ENCODE measurements at regions of chr3 and their contacts with region 1.

Region 1: DNA sequence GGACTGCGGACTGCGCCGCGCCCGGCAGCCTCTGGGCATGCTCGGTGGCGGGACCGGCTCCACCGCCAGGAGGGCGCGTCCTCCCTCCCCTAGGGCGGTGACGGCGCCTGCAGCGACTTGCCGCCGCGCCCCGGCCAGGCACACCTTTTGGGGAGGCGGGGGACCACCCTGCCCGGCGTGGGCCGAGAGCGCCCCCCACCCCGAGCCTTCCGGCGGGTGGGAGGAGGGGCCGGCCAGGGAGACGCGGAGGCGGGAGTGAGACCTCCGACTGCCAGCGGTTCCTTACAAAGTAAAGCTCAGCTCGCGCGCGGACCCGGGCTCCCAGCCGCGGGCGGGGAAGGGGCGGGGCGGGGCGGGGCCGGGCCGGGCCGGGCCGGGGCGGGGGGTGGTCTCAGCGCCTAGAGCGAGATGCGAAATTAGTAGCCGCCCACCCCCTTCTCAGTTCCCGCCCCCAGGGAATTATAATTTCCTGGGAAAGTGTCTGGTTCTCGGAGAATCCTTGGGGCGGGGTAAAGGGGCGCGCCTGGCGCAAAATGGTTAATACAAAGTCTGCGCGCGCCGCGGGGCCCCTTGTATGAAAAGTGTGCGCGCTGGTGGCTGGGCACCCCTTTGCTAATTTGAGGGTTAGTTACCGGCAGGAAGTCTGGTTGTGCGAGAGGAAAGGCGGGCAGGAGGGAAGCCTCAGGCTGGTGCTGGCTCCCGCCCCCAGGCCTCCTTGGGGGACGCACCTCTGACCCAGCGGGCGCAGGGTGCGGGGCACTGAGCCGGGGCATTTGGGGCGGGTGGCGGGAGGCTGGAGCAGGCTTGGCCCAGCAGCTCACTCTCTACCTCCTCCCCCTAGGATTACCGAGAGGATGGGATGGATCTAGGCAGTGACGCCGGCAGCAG is 224.8 kb upstream of the IL12A start:
- DNase-seq: peak; percentile 83 to 93
- ATAC-seq: peak; percentile 83
- H3K4me3 ChIP-seq: peak overlapping the region; percentile 78 to 86
- H3K27ac ChIP-seq: peak overlapping the region; percentile 97 to 98
- H3K4me1 ChIP-seq: peaks cover 0 to 4% of the 10 kb centered on the region in 2 donors
- H3K27me3 ChIP-seq: no peaks in the 10 kb centered on the region

Region 2: GRCh38 chr3:158819282-158819681 is 944.6 kb before region 1 on chr3:
- intact Hi-C with region 1: no loop called
- DNase-seq: no peak
- ATAC-seq: no peak
- H3K4me3 ChIP-seq: no peak overlapping the region
- H3K27ac ChIP-seq: no peak overlapping the region
- H3K4me1 ChIP-seq: no peaks in the 10 kb centered on the region
- H3K27me3 ChIP-seq: no peaks in the 10 kb centered on the region

Region 3: GRCh38 chr3:159522262-159522661 is 241.6 kb before region 1 on chr3:
- intact Hi-C with region 1: no loop called
- DNase-seq: no peak
- ATAC-seq: no peak
- H3K4me3 ChIP-seq: no peak overlapping the region
- H3K27ac ChIP-seq: no peak overlapping the region
- H3K4me1 ChIP-seq: no peaks in the 10 kb centered on the region
- H3K27me3 ChIP-seq: no peaks in the 10 kb centered on the region

Region 4: DNA sequence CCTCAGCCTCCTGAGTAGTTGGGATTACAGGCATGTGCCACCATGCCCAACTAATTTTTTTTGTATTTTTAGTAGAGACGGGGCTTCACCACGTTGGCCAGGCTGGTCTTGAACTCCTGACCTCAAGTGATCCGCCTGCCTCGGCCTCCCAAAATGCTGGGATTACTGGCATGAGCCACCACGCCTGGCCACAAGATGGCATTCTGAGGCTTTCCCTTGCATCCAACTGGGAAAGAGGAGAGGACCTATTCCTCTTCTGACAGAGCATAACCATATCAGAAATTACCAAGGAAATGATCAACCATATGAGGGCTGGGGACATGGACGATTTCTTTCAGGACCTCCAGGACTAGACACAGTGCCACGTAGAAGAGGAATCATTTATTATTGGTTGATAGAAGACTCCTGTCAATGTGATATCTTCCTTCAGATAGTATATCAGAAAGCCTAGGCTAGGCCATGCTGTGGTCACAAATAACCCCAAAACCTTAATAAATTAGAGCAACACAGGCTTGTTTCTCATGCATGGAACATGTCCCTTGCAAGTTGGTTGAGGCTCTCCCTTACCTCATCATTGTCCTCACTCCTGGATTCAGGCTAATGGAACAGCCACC is 147.5 kb before region 1 on chr3:
- intact Hi-C with region 1: loop called (anchors 5 kb)
- DNase-seq: peak; percentile 53 to 83
- ATAC-seq: peak; percentile 64
- H3K4me3 ChIP-seq: no peak overlapping the region
- H3K27ac ChIP-seq: no peak overlapping the region
- H3K4me1 ChIP-seq: peaks cover 0 to 1% of the 10 kb centered on the region in 2 donors
- H3K27me3 ChIP-seq: no peaks in the 10 kb centered on the region

Region 5: DNA sequence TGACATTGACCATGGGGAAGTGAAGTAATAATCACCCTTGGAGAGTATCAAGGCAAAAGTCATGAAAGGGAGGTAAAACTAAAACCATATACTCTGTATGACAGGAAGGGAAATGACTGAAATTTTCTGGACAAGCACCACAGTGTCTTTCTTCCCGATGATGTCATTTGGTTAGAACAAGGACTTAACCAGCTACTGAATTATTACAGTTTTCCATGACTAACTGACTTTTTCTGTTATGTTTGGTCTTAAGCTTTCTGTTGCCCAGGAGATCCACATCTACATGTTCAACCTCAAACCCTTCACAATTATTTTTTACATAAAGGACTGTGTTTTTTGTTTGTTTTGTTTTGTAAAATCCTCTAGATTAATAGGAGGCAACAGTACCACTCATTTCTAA is 32.9 kb after region 1 on chr3:
- intact Hi-C with region 1: loop called (anchors 2 kb)
- DNase-seq: no peak
- ATAC-seq: peak; percentile 77
- H3K4me3 ChIP-seq: no peak overlapping the region
- H3K27ac ChIP-seq: peak overlapping the region in 1 of 2 donors; percentile 99
- H3K4me1 ChIP-seq: peaks cover 12 to 25% of the 10 kb centered on the region in 2 donors
- H3K27me3 ChIP-seq: no peaks in the 10 kb centered on the region

Region 6: DNA sequence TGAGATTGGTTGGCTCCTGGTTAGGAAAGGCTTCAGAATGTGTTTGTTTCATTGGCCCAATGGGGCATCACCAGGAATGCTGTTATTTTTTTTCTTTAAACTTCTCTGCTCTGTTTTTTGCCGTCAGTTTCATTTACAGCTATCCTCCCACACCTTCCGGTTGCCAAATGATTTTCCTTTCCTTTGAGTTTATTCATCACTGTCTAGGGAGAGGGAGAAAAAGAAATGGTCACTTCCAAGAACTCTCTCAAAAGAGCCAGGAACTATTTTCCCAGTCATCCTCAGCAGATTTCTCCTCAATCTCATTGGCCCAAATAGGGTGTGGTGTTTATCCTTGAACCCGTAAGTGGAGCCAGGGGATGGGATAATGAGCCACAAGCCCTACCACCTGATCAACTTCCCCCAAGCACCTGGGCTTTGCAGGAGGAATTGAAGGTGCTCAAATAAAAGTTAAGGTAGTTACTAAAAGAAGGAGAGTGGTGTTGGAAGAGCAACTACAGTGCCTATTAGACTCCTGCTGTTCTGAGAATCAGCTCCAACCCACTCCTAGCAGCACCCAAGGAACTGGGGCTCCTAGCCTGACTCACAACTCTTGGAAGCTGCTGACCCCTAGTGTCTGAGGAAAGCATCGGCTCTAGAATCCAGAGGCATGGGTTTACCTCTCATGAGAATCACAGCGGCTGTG is 41.0 kb after region 1 on chr3:
- intact Hi-C with region 1: loop called in 1 of 2 experiments (anchors 2 kb)
- DNase-seq: peak in 1 of 2 donors; percentile 81
- ATAC-seq: peak; percentile 94
- H3K4me3 ChIP-seq: no peak overlapping the region
- H3K27ac ChIP-seq: peak overlapping the region; percentile 36 to 67
- H3K4me1 ChIP-seq: peaks cover 5 to 20% of the 10 kb centered on the region in 2 donors
- H3K27me3 ChIP-seq: no peaks in the 10 kb centered on the region

Region 7: GRCh38 chr3:159852821-159853505 is 89.1 kb after region 1 on chr3:
- intact Hi-C with region 1: loop called in 1 of 2 experiments (anchors 10 kb)
- DNase-seq: peak; percentile 56 to 80
- ATAC-seq: peak; percentile 71
- H3K4me3 ChIP-seq: peak overlapping the region in 1 of 2 donors; percentile 49
- H3K27ac ChIP-seq: peak overlapping the region; percentile 54 to 81
- H3K4me1 ChIP-seq: peaks cover 5 to 18% of the 10 kb centered on the region in 2 donors
- H3K27me3 ChIP-seq: no peaks in the 10 kb centered on the region